H1 (cell line): ENCODE measurements at regions of chr14 and their contacts with region 1.

Region 1: GRCh38 chr14:73227812-73228781 is 9.2 kb upstream of the PAPLN start:
- DNase-seq: no peak
- H3K4me3 ChIP-seq: no peak overlapping the region
- H3K27ac ChIP-seq: no peak overlapping the region
- H3K4me1 ChIP-seq: peaks cover 9 to 21% (median 11%) of the 10 kb centered on the region in 4 experiments
- H3K27me3 ChIP-seq: no peaks in the 10 kb centered on the region
- CTCF ChIP-seq: no peak
- EP300 ChIP-seq: no peak
- POLR2A ChIP-seq: no peak
- RAD21 ChIP-seq: no peak

Region 2: GRCh38 chr14:73245401-73246325 is 17.6 kb after region 1 on chr14:
- CTCF ChIA-PET with region 1: interaction called, 35 read pairs
- POLR2A ChIA-PET with region 1: interaction called, 4 read pairs
- DNase-seq: no peak
- H3K4me3 ChIP-seq: peak overlapping the region; percentile 44 to 58 (median 50)
- H3K27ac ChIP-seq: no peak overlapping the region
- H3K4me1 ChIP-seq: peaks cover 0 to 12% (median 6%) of the 10 kb centered on the region in 4 experiments; a peak in 4 of 7 replicates
- H3K27me3 ChIP-seq: no peaks in the 10 kb centered on the region
- CTCF ChIP-seq: no peak
- EP300 ChIP-seq: no peak
- POLR2A ChIP-seq: no peak
- RAD21 ChIP-seq: no peak

Region 3: DNA sequence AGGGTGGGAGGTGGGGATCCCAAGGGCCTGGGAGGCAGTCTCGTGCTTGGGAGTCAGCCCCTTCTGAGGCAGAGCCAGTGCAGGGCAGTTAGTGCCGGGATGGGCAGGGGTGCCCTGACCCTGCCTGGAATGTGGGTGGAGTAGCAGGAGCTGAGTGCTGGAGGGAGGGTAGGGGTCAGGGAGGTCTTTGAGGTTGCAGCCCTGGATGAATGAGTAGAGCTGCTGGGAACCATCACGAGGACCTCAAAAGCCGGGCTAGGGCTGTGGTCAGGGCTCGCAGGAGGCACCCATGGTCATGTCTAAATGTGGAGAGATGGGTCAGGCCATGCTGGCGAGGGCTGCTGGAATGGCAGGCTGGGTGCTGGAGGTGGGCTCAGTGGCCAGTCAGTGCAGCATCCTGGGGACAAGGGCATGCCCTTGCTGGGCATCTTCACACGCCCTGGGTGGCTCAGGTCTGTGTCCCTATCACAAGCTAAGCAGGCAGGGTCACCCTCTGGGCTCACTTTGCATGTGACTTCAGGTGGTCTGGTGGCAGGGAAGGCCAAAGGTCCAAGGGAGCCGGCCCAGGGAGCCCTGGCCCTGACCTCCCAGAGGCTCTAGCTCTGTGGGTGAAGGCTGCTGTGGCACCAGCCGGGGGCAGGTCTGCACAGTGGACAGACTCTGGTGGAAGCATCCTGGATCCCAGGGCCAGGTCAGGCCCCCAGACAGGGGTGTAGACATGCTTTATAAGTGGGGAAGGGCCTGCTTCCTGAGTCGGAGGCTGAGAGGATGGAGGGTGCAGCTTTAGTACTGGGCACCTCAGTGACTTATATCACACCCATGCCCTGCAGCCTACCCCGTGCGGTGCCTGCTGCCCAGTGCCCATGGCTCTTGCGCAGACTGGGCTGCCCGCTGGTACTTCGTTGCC is 33.7 kb after region 1 on chr14:
- CTCF ChIA-PET with region 1: interaction called, 46 read pairs
- POLR2A ChIA-PET with region 1: interaction called, 5 read pairs
- DNase-seq: no peak
- H3K4me3 ChIP-seq: no peak overlapping the region
- H3K27ac ChIP-seq: no peak overlapping the region
- H3K4me1 ChIP-seq: no peaks in the 10 kb centered on the region; a peak in 2 of 7 replicates
- H3K27me3 ChIP-seq: no peaks in the 10 kb centered on the region
- CTCF ChIP-seq: no peak
- EP300 ChIP-seq: no peak
- POLR2A ChIP-seq: no peak
- RAD21 ChIP-seq: no peak

Region 4: GRCh38 chr14:73283608-73284379 is 55.7 kb after region 1 on chr14:
- CTCF ChIA-PET with region 1: interaction called, 50 read pairs
- POLR2A ChIA-PET with region 1: interaction called, 3 read pairs
- DNase-seq: peak in 1 of 2 experiments; percentile 44
- H3K4me3 ChIP-seq: peak overlapping the region in 1 of 4 experiments; percentile 8; a peak in 1 of 8 replicates
- H3K27ac ChIP-seq: no peak overlapping the region
- H3K4me1 ChIP-seq: peaks cover 3 to 28% (median 19%) of the 10 kb centered on the region in 4 experiments
- H3K27me3 ChIP-seq: no peaks in the 10 kb centered on the region
- CTCF ChIP-seq: peak; percentile 12 to 75 (median 59)
- EP300 ChIP-seq: no peak
- POLR2A ChIP-seq: no peak
- RAD21 ChIP-seq: peak; percentile 79 to 82

Region 5: DNA sequence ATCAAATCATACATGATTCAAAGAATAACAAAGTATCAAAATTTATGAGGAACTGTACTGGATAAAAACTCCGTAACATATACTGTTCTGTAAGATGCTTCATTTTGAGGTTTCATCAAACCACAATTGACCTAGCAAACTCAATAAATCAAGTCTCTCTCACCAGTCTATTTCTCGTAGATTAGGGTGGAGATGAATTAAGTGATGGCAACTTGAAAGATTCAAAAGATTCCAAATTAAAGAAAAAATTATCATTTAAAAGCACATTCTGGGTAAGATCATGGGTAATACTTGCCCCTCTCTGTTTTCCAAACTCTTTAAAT is 83.6 kb after region 1 on chr14:
- CTCF ChIA-PET with region 1: no interaction called
- POLR2A ChIA-PET with region 1: no interaction called
- DNase-seq: no peak
- H3K4me3 ChIP-seq: no peak overlapping the region
- H3K27ac ChIP-seq: no peak overlapping the region
- H3K4me1 ChIP-seq: no peaks in the 10 kb centered on the region
- H3K27me3 ChIP-seq: no peaks in the 10 kb centered on the region
- CTCF ChIP-seq: no peak
- EP300 ChIP-seq: no peak
- POLR2A ChIP-seq: no peak
- RAD21 ChIP-seq: no peak

Region 6: DNA sequence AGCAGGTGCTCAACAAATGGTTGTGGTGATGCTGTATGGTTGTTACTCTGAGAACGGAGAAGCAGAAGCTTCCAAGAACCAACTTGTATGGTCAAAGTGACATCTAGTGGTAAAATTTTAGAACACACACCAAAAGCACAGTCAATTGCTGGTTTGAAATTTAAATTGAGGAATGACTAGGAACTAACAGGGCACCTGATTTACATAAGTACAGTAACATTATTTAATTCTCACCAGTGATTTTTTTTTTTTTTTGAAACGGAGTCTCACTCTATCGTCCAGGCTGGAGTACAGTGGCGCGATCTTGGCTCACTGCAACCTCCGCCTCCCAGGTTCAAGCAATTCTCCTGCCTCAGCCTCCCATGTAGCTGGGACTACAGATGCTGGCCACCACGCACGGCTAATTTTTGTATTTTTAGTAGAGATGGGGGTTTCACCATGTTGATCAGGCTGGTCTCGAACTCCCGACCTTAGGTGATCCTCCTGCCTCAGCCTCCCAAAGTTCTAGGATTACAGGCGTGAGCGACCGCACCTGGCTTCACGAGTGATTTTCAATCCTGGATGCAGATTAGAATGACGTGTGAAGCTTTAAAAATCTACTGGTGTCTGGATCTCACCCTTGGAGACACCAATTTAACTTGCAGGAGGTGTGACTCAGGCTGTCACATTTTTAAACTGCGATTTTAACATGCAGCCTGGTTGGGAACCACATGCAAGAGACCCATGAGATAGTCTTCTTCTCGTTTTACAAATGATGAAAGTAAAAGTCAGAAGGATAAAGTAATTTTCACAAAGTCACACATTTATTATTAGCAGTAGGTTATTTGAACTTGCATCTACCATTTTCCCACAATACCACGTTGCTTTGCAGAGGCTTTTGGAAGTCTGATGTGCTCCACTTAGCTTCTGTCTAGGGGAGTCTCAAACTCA is 244.4 kb after region 1 on chr14:
- CTCF ChIA-PET with region 1: interaction called, 33 read pairs
- POLR2A ChIA-PET with region 1: interaction called, 4 read pairs
- DNase-seq: no peak
- H3K4me3 ChIP-seq: no peak overlapping the region
- H3K27ac ChIP-seq: no peak overlapping the region
- H3K4me1 ChIP-seq: no peaks in the 10 kb centered on the region
- H3K27me3 ChIP-seq: no peaks in the 10 kb centered on the region
- CTCF ChIP-seq: peak in 2 of 3 experiments; percentile 67 to 78; a peak in 3 of 4 replicates
- EP300 ChIP-seq: no peak
- POLR2A ChIP-seq: no peak
- RAD21 ChIP-seq: peak; percentile 95 to 96

Region 7: DNA sequence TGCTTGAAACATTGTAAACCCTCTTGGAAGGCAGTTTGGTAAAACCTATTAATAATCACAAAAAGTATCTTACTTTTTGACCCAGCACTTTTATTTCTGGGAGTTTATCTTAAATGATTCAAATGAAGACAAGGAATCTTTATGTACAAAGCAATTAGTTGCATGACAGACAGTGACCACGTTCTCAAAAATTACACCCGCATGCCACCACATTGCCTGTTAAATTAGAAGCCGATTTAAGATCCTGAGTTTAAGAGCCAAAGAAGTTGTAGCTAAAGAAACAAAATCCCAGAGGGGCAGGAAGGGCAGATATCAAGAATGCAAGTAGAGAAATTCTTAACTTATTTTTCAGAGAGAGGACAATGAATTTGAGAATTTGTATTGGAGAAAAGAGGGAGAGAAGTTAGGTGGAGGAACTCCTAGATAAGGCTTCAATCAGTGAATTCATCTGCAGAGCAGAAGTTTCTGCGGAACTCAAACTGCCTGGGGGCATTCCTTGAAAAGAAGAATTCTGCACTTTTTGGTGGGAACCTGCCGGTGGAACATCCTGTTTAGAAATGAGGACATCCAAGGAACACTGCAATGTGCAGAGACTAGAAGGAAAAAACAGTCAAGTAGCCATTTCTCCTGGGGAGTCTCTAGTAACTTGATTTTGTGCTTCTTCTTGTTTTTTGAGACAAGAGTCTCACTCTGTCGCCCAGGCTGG is 261.5 kb after region 1 on chr14:
- CTCF ChIA-PET with region 1: no interaction called
- POLR2A ChIA-PET with region 1: no interaction called
- DNase-seq: no peak
- H3K4me3 ChIP-seq: no peak overlapping the region
- H3K27ac ChIP-seq: no peak overlapping the region
- H3K4me1 ChIP-seq: peaks cover 6 to 15% (median 9%) of the 10 kb centered on the region in 4 experiments; a peak in 6 of 7 replicates
- H3K27me3 ChIP-seq: peaks cover 0 to 4% (median 0%) of the 10 kb centered on the region in 4 experiments; a peak in 1 of 7 replicates
- CTCF ChIP-seq: no peak
- EP300 ChIP-seq: no peak
- POLR2A ChIP-seq: no peak
- RAD21 ChIP-seq: no peak